CD8-positive, alpha-beta T cell (primary cell): ENCODE measurements at regions of chr17 and their contacts with region 1.

Region 1: GRCh38 chr17:3845621-3846441 is at the start of gene NCBP3:
- DNase-seq: peak; percentile 80 to 95 (median 91)
- ATAC-seq: peak; percentile 94
- H3K4me3 ChIP-seq: peak within 1 kb of the TSS; percentile 84 to 99
- H3K4me3 Mint-ChIP-seq: peak within 1 kb of the TSS; percentile 93
- H3K27ac ChIP-seq: peak within 1 kb of the TSS; percentile 77 to 87
- H3K27ac Mint-ChIP-seq: peak within 1 kb of the TSS; percentile 89
- H3K4me1 ChIP-seq: peaks cover 14% of the 10 kb centered on the region
- H3K4me1 Mint-ChIP-seq: peaks cover 29% of the 10 kb centered on the region
- H3K27me3 ChIP-seq: no peaks in the 10 kb centered on the region
- H3K27me3 Mint-ChIP-seq: peaks cover 2% of the 10 kb centered on the region
- CTCF ChIP-seq: peak; percentile 88
- total RNA-seq, gene NCBP3: 28.4 to 35.3 TPM

Region 2: DNA sequence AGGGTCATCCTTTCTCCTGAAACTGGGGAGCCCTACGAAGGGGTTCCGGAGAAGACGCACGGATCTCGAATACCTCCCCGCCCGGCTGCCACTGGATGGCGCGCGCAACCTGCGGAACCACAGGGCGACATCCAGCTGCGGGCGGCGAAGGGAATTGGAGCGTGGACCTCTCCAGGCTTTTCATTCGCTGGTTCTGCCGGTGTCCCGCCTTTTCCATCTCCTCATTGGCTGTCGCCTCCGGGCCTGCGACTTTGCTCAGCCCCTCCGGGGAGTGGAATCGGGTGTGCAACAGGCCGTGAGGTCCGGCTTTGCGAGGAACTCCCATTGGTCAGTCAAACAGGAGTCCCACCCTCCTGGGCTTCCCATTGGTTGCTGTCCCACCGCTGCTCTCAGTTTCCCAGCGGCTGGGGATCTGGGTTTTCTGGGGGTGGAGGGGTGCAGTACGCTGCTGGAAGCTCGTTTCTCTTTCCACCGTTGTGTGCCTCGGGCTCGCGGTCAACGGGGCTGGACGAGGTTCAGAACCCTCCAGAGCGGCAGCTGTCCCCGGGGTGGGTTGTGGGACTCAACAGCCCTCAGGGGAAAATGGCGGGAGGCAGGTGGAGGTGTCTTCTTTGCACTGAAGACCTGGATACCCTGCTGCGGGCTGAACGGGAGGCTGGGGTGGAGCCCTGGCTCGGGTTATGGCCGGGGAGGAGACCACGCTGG is 796.9 kb before region 1 on chr17:
- CTCF ChIA-PET with region 1: no interaction called
- POLR2A ChIA-PET with region 1: no interaction called
- intact Hi-C with region 1: loop called in 1 of 2 experiments (anchors 5 kb)
- DNase-seq: peak; percentile 81 to 97 (median 90)
- ATAC-seq: peak; percentile 96
- H3K4me3 ChIP-seq: peak overlapping the region; percentile 67 to 91
- H3K4me3 Mint-ChIP-seq: peak overlapping the region; percentile 87
- H3K27ac ChIP-seq: peak overlapping the region; percentile 27 to 45
- H3K27ac Mint-ChIP-seq: peak overlapping the region; percentile 55
- H3K4me1 ChIP-seq: no peaks in the 10 kb centered on the region
- H3K4me1 Mint-ChIP-seq: peaks cover 6% of the 10 kb centered on the region
- H3K27me3 ChIP-seq: no peaks in the 10 kb centered on the region
- H3K27me3 Mint-ChIP-seq: no peaks in the 10 kb centered on the region
- CTCF ChIP-seq: peak; percentile 56

Region 3: GRCh38 chr17:3762922-3763776 is 82.7 kb before region 1 on chr17:
- CTCF ChIA-PET with region 1: no interaction called
- POLR2A ChIA-PET with region 1: interaction called, 7 read pairs
- intact Hi-C with region 1: loop called in 1 of 2 experiments (anchors 1 kb)
- DNase-seq: peak in 4 of 9 experiments; percentile 44 to 88 (median 75)
- ATAC-seq: peak; percentile 30
- H3K4me3 ChIP-seq: peak overlapping the region; percentile 16 to 45
- H3K4me3 Mint-ChIP-seq: peak overlapping the region; percentile 82
- H3K27ac ChIP-seq: peak overlapping the region; percentile 42 to 70
- H3K27ac Mint-ChIP-seq: peak overlapping the region; percentile 97
- H3K4me1 ChIP-seq: peaks cover 52% of the 10 kb centered on the region
- H3K4me1 Mint-ChIP-seq: peaks cover 50% of the 10 kb centered on the region
- H3K27me3 ChIP-seq: no peaks in the 10 kb centered on the region
- H3K27me3 Mint-ChIP-seq: no peaks in the 10 kb centered on the region
- CTCF ChIP-seq: no peak

Region 4: GRCh38 chr17:3893003-3893719 is 47.3 kb after region 1 on chr17 and contains the start of gene CAMKK1:
- CTCF ChIA-PET with region 1: interaction called, 3 read pairs
- POLR2A ChIA-PET with region 1: interaction called, 6 read pairs
- intact Hi-C with region 1: loop called (anchors 1 kb)
- DNase-seq: peak; percentile 70 to 93 (median 88)
- ATAC-seq: peak; percentile 69
- H3K4me3 ChIP-seq: peak within 1 kb of the TSS; percentile 48 to 79
- H3K4me3 Mint-ChIP-seq: peak within 1 kb of the TSS; percentile 86
- H3K27ac ChIP-seq: peak within 1 kb of the TSS; percentile 33 to 35
- H3K27ac Mint-ChIP-seq: peak within 1 kb of the TSS; percentile 88
- H3K4me1 ChIP-seq: peaks cover 18% of the 10 kb centered on the region
- H3K4me1 Mint-ChIP-seq: peaks cover 20% of the 10 kb centered on the region
- H3K27me3 ChIP-seq: no peaks in the 10 kb centered on the region
- H3K27me3 Mint-ChIP-seq: no peaks in the 10 kb centered on the region
- CTCF ChIP-seq: no peak
- total RNA-seq, gene CAMKK1: 5.3 to 5.9 TPM

Region 5: DNA sequence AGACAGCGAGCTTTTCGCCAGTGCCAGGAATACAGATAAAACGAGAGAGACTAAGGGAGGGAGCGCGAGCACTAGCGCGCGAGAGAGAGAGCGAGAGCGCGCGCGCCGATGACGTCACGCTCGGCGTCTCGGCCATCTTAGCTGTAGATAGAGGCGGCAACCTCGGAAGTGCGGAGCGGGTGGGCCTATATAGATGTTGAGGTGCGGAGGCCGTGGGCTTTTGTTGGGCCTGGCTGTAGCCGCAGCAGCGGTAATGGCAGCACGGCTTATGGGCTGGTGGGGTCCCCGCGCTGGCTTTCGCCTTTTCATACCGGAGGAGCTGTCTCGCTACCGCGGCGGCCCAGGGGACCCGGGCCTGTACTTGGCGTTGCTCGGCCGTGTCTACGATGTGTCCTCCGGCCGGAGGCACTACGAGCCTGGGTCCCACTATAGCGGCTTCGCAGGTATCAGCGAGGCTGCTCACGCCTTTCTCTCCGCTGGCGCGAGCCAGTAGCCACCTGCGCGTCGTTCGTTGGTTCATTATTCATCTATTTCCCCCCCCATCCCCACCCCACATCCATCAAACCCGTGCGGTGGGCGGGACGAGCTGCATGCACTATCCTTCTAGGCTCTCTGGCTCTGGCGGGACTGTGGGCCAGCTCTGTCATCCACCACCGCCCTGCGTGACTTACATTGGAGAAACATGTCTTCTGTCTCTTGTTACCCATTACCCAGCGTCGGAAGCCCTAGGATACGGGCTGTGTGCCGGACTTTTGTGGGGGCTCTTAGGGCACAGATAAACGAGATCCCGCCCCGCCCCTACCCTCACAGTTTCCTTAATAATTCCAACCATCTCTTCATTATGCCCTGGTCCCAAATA is 298.0 kb after region 1 on chr17:
- CTCF ChIA-PET with region 1: no interaction called
- POLR2A ChIA-PET with region 1: interaction called, 12 read pairs
- intact Hi-C with region 1: loop called (anchors 2 to 5 kb)
- DNase-seq: peak; percentile 81 to 98 (median 91)
- ATAC-seq: peak; percentile 63
- H3K4me3 ChIP-seq: peak overlapping the region; percentile 72 to 88
- H3K4me3 Mint-ChIP-seq: peak overlapping the region; percentile 99
- H3K27ac ChIP-seq: peak overlapping the region; percentile 98
- H3K27ac Mint-ChIP-seq: peak overlapping the region; percentile 100
- H3K4me1 ChIP-seq: peaks cover 42% of the 10 kb centered on the region
- H3K4me1 Mint-ChIP-seq: peaks cover 43% of the 10 kb centered on the region
- H3K27me3 ChIP-seq: no peaks in the 10 kb centered on the region
- H3K27me3 Mint-ChIP-seq: no peaks in the 10 kb centered on the region
- CTCF ChIP-seq: no peak

Region 6: DNA sequence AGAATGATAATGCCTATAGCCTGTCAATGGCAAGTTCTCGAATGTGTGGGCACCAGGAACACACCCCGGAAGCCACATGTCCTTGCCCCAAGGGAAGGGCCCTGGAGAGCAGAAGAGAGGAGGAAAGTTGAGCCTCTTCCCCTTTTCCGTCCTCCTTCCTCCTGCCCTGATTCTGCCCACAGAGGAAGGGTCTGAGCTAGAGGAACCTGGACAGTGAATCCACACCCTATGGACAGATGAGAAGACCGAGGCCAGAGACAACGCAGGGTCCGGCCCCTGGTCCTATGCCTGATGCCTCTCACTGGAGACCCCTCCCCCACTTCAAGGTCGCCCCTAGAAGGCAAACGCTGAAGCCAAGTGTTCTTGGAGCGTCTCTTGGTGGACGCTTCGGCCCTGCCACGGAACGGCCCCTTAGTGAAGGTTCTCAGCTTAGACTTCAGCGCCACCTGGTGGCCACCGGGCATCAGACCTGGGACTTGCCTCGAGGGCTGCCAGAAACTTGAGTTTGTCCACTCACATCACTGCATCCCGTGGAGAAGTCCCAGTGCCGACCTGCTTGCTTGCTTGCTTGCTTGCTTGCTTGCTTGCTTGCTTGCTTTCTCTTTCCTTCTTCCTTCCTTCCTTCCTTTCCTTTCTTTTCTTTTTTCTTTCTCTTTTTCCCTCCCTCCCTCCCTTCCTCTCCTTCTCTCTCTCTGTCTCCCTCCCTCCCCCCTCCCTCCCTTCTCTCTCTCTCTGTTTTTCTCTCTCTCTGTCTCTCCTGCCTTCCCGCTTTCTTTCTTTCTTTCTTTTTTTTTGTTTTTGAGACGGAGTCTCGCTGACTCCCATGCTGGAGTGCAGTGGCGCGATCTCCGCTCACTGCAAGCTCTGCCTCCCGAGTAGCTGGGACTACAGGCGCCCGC is 567.4 kb after region 1 on chr17:
- CTCF ChIA-PET with region 1: no interaction called
- POLR2A ChIA-PET with region 1: no interaction called
- intact Hi-C with region 1: loop called in 1 of 2 experiments (anchors 10 kb)
- DNase-seq: peak; percentile 83 to 96 (median 89)
- ATAC-seq: peak; percentile 96
- H3K4me3 ChIP-seq: peak overlapping the region in 1 of 2 experiments; percentile 4
- H3K4me3 Mint-ChIP-seq: no peak overlapping the region
- H3K27ac ChIP-seq: no peak overlapping the region
- H3K27ac Mint-ChIP-seq: no peak overlapping the region
- H3K4me1 ChIP-seq: peaks cover 4% of the 10 kb centered on the region
- H3K4me1 Mint-ChIP-seq: peaks cover 6% of the 10 kb centered on the region
- H3K27me3 ChIP-seq: no peaks in the 10 kb centered on the region
- H3K27me3 Mint-ChIP-seq: no peaks in the 10 kb centered on the region
- CTCF ChIP-seq: peak; percentile 63